ENCODE measurements at regions of chr5 and their contacts with region 1.

Region 1: DNA sequence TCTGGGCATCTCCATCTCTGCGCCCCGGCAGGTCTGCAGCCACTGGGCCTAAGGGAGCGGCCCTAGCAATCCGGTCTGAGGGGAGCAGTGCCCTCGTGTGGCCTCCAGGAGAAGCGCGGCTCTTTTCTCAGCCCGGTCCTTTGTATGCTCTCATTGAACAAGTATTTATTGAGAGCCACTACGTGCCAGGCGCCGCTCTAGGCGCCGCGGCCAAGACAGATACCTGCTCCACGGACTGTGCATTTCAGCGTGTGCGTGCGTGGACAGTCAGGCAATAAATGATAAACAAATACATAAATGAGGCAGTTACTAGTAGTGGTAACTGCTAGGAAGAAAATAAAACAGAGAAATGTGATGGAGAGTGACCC is 2.3 kb upstream of the SLC4A9 start:
- DNase-seq: peak; percentile 76
- H3K4me3 ChIP-seq: peak overlapping the region; percentile 27
- H3K27ac ChIP-seq: no peak overlapping the region
- H3K27me3 ChIP-seq: no peaks in the 10 kb centered on the region
- CTCF ChIP-seq: peak; percentile 91

Region 2: GRCh38 chr5:139985733-139986132 is 372.0 kb before region 1 on chr5:
- CTCF ChIA-PET with region 1: no interaction called
- POLR2A ChIA-PET with region 1: no interaction called
- DNase-seq: peak; percentile 3
- H3K4me3 ChIP-seq: no peak overlapping the region
- H3K27ac ChIP-seq: no peak overlapping the region
- H3K27me3 ChIP-seq: peaks cover 17% of the 10 kb centered on the region
- CTCF ChIP-seq: no peak

Region 3: GRCh38 chr5:140118294-140118936 is 239.3 kb before region 1 on chr5:
- CTCF ChIA-PET with region 1: no interaction called
- POLR2A ChIA-PET with region 1: no interaction called
- DNase-seq: no peak
- H3K4me3 ChIP-seq: no peak overlapping the region
- H3K27ac ChIP-seq: no peak overlapping the region
- H3K27me3 ChIP-seq: no peaks in the 10 kb centered on the region
- CTCF ChIP-seq: 0 out of 2 replicates have a peak, but pooled peaks have one; percentile 10

Region 4: GRCh38 chr5:140235791-140236551 is 121.7 kb before region 1 on chr5:
- CTCF ChIA-PET with region 1: interaction called, 806 read pairs
- POLR2A ChIA-PET with region 1: interaction called, 3 read pairs
- DNase-seq: no peak
- H3K4me3 ChIP-seq: no peak overlapping the region
- H3K27ac ChIP-seq: no peak overlapping the region
- H3K27me3 ChIP-seq: peaks cover 3% of the 10 kb centered on the region
- CTCF ChIP-seq: no peak

Region 5: GRCh38 chr5:140261403-140262171 is 96.1 kb before region 1 on chr5:
- CTCF ChIA-PET with region 1: interaction called, 98 read pairs
- POLR2A ChIA-PET with region 1: no interaction called
- DNase-seq: peak; percentile 72
- H3K4me3 ChIP-seq: 0 out of 2 replicates have a peak overlapping the region, but pooled peaks have one; percentile 5
- H3K27ac ChIP-seq: no peak overlapping the region
- H3K27me3 ChIP-seq: no peaks in the 10 kb centered on the region
- CTCF ChIP-seq: peak; percentile 19; the same call in 1 of the 2 replicates

Region 6: DNA sequence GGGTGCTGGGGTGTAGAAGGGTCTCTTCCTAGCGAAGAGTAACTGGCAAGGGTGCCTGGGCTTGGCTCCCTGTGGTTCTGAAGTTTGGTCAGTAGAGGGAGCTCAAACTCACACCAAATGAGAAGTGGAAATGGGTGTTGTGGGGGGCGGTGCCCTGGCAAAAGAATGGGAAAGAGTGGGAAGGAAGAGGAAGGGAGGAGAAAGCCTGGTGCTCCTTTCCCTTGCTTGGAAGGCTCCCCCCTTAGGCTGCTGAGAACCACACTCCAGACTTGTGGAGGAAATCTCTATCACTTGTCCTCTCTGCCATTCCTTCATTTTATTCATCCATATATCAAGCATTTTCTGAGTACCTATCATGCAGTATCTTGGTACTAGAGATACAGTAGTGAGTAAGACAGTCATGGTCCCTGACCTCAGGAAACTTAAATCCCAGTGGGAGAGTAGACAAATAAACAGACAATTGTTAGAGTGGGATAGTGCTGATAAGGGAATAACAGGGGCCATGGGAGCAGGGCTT is 15.3 kb after region 1 on chr5:
- CTCF ChIA-PET with region 1: interaction called, 30 read pairs
- POLR2A ChIA-PET with region 1: no interaction called
- DNase-seq: peak; percentile 44
- H3K4me3 ChIP-seq: no peak overlapping the region
- H3K27ac ChIP-seq: no peak overlapping the region
- H3K27me3 ChIP-seq: peaks cover 6% of the 10 kb centered on the region
- CTCF ChIP-seq: peak; percentile 91